Activated naive CD4-positive, alpha-beta T cell treated with anti-CD3 and anti-CD28 coated beads for 36 hours (primary cell): ENCODE measurements at regions of chr5 and their contacts with region 1.

Region 1: DNA sequence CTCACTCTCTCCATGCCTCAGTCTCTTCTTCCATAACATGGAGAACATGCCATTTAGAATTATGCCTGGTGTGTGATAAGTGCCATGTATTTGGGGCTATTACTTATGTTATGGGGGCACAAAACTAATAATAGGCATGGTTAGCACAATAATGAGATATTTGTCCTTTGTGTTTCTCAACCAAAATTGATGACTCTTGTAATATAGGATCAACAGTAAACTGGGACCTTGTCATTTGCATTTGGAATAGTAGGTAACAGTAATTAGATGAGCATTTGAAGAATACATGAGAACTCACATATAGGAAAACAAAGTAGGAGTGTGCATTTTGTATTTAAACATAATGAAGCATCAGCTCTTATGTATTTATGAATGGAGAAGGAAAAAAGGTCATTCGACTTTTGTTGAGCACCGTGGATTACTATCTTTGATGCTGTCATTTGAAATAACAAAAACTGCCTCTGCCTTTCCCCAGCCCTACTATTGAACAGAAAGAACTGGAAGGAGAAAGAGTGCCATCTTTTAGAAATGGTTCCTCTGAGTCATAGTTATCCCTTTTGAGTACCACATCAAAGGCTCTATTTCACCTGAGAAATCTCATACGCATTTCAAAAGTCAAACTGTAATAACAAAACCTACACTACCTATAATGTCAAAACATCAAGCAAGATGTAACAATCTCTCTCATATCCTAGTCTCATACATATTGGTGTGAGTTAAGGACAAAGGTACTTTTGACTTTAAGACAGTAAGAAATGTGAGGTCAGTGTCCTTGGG is 655.2 kb downstream of the PDE4D start:
- DNase-seq: peak; percentile 35
- H3K4me3 Mint-ChIP-seq: no peak overlapping the region
- H3K27ac Mint-ChIP-seq: no peak overlapping the region
- H3K4me1 Mint-ChIP-seq: peaks cover 22% of the 10 kb centered on the region
- H3K27me3 Mint-ChIP-seq: peaks cover 38% of the 10 kb centered on the region

Region 2: DNA sequence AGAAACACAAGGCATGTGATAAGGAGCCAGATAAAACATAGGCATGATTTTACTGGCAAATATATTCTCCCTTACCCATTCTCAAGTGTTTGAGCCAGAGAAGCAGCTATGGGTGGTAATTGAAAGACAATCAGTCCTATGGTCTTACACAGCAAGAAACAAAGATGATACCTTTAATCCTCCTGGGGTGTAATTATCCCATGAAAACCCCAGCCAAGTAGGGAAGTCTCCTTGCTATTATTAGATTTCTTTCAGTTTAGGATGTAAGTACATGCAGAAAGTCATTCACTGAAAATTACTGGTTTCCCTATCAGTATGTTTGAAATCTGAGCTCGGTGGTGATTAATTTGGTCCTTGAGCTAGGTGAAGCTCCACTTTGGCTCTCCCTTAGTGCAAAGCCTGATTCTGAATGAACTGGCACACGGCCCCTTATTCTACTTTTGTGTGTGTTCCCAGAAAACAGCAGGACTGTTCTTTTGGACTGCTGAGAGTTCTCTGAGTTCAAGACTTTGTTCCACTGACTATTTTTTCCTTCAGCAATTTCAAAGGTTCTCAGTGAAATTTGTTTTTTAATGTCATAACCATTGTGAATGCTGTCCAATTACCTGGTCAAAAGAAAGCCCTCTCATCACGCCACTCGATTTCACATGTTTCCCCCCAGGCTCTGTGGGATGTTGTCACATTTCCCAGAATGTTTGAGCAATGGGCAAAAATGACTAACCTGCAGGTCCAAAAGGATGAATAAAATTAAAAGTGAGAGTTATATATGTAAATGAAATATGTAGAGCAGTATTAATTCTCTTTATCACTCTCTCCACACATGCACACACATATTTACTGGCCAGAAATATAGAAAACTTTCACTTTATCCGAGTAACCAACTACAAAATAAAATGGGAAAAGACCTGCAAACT is 312.4 kb before region 1 on chr5:
- CTCF ChIA-PET with region 1: no interaction called
- intact Hi-C with region 1: loop called (anchors 1 kb)
- DNase-seq: peak; percentile 43
- H3K4me3 Mint-ChIP-seq: peak overlapping the region; percentile 39
- H3K27ac Mint-ChIP-seq: peak overlapping the region; percentile 84
- H3K4me1 Mint-ChIP-seq: peaks cover 39% of the 10 kb centered on the region
- H3K27me3 Mint-ChIP-seq: peaks cover 2% of the 10 kb centered on the region

Region 3: GRCh38 chr5:59039296-59040023 is 198.9 kb before region 1 on chr5:
- CTCF ChIA-PET with region 1: no interaction called
- intact Hi-C with region 1: loop called (anchors 1 kb)
- DNase-seq: peak; percentile 90
- H3K4me3 Mint-ChIP-seq: peak overlapping the region; percentile 94
- H3K27ac Mint-ChIP-seq: peak overlapping the region; percentile 96
- H3K4me1 Mint-ChIP-seq: peaks cover 44% of the 10 kb centered on the region
- H3K27me3 Mint-ChIP-seq: no peaks in the 10 kb centered on the region

Region 4: GRCh38 chr5:59272809-59273427 is 34.6 kb after region 1 on chr5:
- CTCF ChIA-PET with region 1: interaction called, 3 read pairs
- intact Hi-C with region 1: loop called (anchors 1 kb)
- DNase-seq: no peak
- H3K4me3 Mint-ChIP-seq: no peak overlapping the region
- H3K27ac Mint-ChIP-seq: no peak overlapping the region
- H3K4me1 Mint-ChIP-seq: peaks cover 10% of the 10 kb centered on the region
- H3K27me3 Mint-ChIP-seq: peaks cover 16% of the 10 kb centered on the region

Region 5: DNA sequence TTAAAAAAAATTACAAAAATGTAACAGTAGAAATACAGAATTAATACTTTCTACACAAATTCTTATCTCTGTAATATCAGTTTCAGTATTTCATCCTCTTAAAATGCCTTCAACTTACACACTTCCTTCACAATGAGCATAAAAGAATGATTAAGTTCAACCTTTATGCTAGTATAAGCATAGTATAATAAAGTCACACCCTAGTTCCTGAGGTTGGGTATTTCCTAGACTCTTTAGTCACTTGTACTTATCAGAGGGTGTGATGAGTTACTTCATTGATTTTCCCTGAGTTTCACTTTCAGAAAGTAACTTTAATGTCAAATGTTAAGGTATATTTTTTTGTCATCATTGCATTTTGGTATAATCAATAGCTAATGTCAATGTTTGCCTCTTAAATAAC is 352.8 kb after region 1 on chr5:
- CTCF ChIA-PET with region 1: no interaction called
- intact Hi-C with region 1: loop called (anchors 1 kb)
- DNase-seq: no peak
- H3K4me3 Mint-ChIP-seq: no peak overlapping the region
- H3K27ac Mint-ChIP-seq: no peak overlapping the region
- H3K4me1 Mint-ChIP-seq: peaks cover 10% of the 10 kb centered on the region
- H3K27me3 Mint-ChIP-seq: peaks cover 19% of the 10 kb centered on the region